HepG2 (cell line): ENCODE measurements at regions of chr17 and their contacts with region 1.

Region 1: GRCh38 chr17:47831003-47831933 is at the starts of genes LRRC46 and MRPL10:
- DNase-seq: peak; percentile 91
- ATAC-seq: peak; percentile 95
- H3K4me3 ChIP-seq: peak within 1 kb of the TSS; percentile 81 to 97 (median 82)
- H3K27ac ChIP-seq: peak within 1 kb of the TSS; percentile 69
- H3K4me1 ChIP-seq: peaks cover 23% of the 10 kb centered on the region
- H3K27me3 ChIP-seq: peaks cover 0 to 5% of the 10 kb centered on the region in 2 experiments; a peak in 1 of 5 replicates
- CTCF ChIP-seq: peak; percentile 59
- EP300 ChIP-seq: peak in 1 of 2 experiments; percentile 24; a peak in 1 of 4 replicates
- POLR2A ChIP-seq: peak; percentile 96 to 98
- RAD21 ChIP-seq: peak; percentile 25; the same call in 1 of the 2 replicates
- total RNA-seq, gene LRRC46: 0.09 and 0.13 TPM in 2 replicates
- total RNA-seq, gene MRPL10: 56.7 and 59.7 TPM in 2 replicates

Region 2: DNA sequence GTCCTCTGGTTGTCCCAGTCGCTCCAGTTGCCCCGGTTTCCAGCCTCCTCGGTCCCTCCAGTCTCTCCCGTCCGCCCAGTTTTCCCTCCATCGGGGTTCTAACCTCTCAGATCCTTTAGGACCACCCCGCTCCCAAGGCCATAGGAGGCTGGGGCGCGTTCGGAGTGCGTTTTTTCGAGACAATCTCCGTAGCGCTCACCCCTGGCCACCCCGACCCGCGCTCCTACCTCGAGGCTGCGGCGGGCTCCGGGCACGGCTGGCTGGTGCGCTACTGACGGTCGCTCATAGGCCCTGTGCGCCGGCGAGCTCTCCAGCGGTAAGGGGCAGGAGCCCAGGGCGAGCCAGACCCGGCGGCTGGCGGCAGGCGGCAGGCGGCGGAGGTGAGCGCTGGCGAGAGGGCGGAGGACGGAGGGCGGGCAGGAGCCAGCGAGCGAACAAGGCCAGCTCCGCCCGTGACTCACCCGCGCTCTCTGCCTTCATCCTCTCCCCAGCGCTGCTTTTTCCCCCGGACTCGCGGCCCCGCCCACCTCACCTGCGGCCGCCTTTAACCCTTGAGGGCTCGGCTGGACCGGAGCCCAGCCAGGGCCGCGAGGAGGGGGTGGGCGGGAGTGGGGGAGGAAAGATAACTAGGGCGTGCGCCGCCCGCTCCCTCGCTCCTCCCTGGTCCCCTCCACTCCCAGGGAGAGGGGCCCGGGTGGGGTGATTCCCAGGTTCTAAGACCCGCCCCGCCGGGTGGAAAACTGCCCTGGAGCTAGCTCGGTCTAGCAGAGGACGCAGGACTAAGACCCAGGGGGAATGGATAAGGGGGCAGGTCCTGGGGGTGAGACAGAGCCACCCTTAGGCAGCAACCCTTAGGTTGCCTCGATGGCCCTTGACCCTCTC is 19.7 kb after region 1 on chr17 and contains the start of gene SP6:
- CTCF ChIA-PET with region 1: no interaction called
- POLR2A ChIA-PET with region 1: interaction called, 27 read pairs
- in situ Hi-C with region 1: no loop called
- intact Hi-C with region 1: no loop called
- DNase-seq: peak; percentile 77
- ATAC-seq: peak; percentile 97
- H3K4me3 ChIP-seq: peak within 1 kb of the TSS; percentile 44 to 74 (median 54)
- H3K27ac ChIP-seq: no peak within 1 kb of the TSS
- H3K4me1 ChIP-seq: peaks cover 12% of the 10 kb centered on the region
- H3K27me3 ChIP-seq: peaks cover 19 to 72% of the 10 kb centered on the region in 2 experiments
- CTCF ChIP-seq: peak; percentile 72
- EP300 ChIP-seq: no peak
- POLR2A ChIP-seq: peak; percentile 30 to 75; a peak in 3 of 4 replicates
- RAD21 ChIP-seq: peak; percentile 76
- total RNA-seq, gene SP6: 0.07 TPM in 1 of 2 replicates, not detected in the other